Testis (tissue), 5 donors: ENCODE measurements at regions of chr12 and their contacts with region 1.

Region 1: DNA sequence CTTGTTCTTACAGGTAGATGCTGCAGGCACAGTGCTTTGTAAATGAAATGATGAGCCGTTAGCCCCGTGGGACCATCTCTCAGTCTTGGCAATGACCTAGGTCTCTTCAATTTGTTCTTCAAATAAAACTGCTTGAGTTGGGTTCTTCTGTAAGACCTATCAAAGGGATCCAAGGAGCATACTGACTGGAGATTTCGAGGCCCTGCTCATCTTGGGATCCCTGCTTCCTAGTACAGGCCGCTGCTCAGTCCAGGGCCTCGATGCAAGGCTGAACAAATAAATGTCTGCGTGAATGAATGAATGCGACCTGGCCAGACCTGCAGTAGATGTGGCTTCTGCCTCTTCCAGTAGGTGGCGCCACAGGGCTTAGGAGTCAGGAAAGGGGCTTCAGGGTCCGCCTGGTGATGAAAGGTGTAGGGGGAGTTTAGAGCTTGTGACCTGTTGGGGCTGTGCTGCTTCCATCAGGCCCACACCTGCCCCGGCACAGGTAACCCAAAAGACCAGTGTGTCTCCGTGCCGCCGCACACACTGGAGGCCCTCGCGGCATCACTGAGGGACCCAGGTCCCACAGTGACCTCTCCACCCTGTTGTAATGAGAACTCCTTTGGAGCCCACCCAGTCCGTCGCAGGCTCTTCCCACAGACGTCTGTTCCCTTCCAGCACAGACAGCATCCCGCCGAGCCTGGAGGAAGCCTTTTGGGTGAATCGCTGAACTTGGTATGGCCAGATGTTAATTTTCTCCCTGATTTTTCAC is 4.4 kb downstream of the CACNA1C start:
- DNase-seq: peak; percentile 88
- H3K4me3 ChIP-seq: no peak overlapping the region
- H3K27ac ChIP-seq: no peak overlapping the region
- H3K4me1 ChIP-seq: no peaks in the 10 kb centered on the region
- H3K27me3 ChIP-seq: no peaks in the 10 kb centered on the region
- CTCF ChIP-seq: peak; percentile 22 to 67 (median 55)
- POLR2A ChIP-seq: no peak

Region 2: GRCh38 chr12:2004113-2004929 is 52.9 kb before region 1 on chr12 and contains the start of gene DCP1B:
- intact Hi-C with region 1: no loop called
- DNase-seq: peak; percentile 98
- H3K4me3 ChIP-seq: peak within 1 kb of the TSS; percentile 84 to 98
- H3K27ac ChIP-seq: peak within 1 kb of the TSS; percentile 88 to 92
- H3K4me1 ChIP-seq: peaks cover 5% of the 10 kb centered on the region
- H3K27me3 ChIP-seq: no peaks in the 10 kb centered on the region
- CTCF ChIP-seq: peak in 2 of 3 experiments; percentile 11 to 19
- POLR2A ChIP-seq: no peak
- total RNA-seq, gene DCP1B: 36.6 to 40.0 TPM

Region 3: GRCh38 chr12:2138871-2139308 is 81.7 kb after region 1 on chr12:
- intact Hi-C with region 1: no loop called
- DNase-seq: no peak
- H3K4me3 ChIP-seq: no peak overlapping the region
- H3K27ac ChIP-seq: no peak overlapping the region
- H3K4me1 ChIP-seq: peaks cover 4% of the 10 kb centered on the region
- H3K27me3 ChIP-seq: no peaks in the 10 kb centered on the region
- CTCF ChIP-seq: no peak
- POLR2A ChIP-seq: no peak

Region 4: GRCh38 chr12:2284857-2285256 is 227.6 kb after region 1 on chr12:
- intact Hi-C with region 1: loop called (anchors 10 kb)
- DNase-seq: peak; percentile 80
- H3K4me3 ChIP-seq: no peak overlapping the region
- H3K27ac ChIP-seq: no peak overlapping the region
- H3K4me1 ChIP-seq: no peaks in the 10 kb centered on the region
- H3K27me3 ChIP-seq: no peaks in the 10 kb centered on the region
- CTCF ChIP-seq: peak in 2 of 3 experiments; percentile 48 to 56
- POLR2A ChIP-seq: no peak

Region 5: DNA sequence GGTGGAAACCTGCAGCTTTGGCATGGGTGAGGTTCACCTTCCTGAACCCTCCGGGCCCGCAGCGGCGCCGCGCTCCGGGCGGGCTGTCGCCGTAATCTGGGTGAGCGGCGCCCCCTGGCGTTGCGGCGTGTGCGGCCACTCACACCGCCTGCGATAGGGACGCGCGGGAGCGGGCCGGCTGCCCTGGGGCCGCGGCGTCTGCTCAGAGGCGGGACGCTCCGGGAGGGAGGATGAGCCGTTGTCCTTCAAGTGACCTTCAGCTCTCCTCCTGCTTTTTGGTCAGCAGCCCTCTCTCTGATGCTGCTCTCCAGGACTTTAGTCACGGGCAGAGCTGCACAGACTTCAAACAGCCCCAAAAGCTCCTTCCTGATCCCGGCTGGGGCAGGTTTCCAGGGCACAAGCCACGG is 525.9 kb after region 1 on chr12:
- intact Hi-C with region 1: loop called (anchors 10 kb)
- DNase-seq: peak; percentile 79
- H3K4me3 ChIP-seq: peak overlapping the region; percentile 27 to 38
- H3K27ac ChIP-seq: no peak overlapping the region
- H3K4me1 ChIP-seq: no peaks in the 10 kb centered on the region
- H3K27me3 ChIP-seq: no peaks in the 10 kb centered on the region
- CTCF ChIP-seq: peak; percentile 72 to 92 (median 90)
- POLR2A ChIP-seq: no peak